PC-3 (cell line): ENCODE measurements at regions of chr6 and their contacts with region 1.

Region 1: GRCh38 chr6:144696610-144697368 is 411.7 kb downstream of the UTRN start:
- DNase-seq: peak; percentile 61
- ATAC-seq: peak; percentile 84
- H3K4me3 ChIP-seq: no peak overlapping the region
- H3K27ac ChIP-seq: peak overlapping the region; percentile 34; the same call in 1 of the 2 replicates
- H3K4me1 ChIP-seq: peaks cover 13% of the 10 kb centered on the region
- H3K27me3 ChIP-seq: no peaks in the 10 kb centered on the region
- CTCF ChIP-seq: no peak

Region 2: GRCh38 chr6:144710237-144710636 is 13.4 kb after region 1 on chr6:
- CTCF ChIA-PET with region 1: no interaction called
- POLR2A ChIA-PET with region 1: no interaction called
- intact Hi-C with region 1: loop called (anchors 2 kb)
- DNase-seq: peak; percentile 91
- ATAC-seq: peak; percentile 94
- H3K4me3 ChIP-seq: no peak overlapping the region
- H3K27ac ChIP-seq: peak overlapping the region; percentile 63
- H3K4me1 ChIP-seq: peaks cover 35% of the 10 kb centered on the region
- H3K27me3 ChIP-seq: no peaks in the 10 kb centered on the region
- CTCF ChIP-seq: no peak

Region 3: DNA sequence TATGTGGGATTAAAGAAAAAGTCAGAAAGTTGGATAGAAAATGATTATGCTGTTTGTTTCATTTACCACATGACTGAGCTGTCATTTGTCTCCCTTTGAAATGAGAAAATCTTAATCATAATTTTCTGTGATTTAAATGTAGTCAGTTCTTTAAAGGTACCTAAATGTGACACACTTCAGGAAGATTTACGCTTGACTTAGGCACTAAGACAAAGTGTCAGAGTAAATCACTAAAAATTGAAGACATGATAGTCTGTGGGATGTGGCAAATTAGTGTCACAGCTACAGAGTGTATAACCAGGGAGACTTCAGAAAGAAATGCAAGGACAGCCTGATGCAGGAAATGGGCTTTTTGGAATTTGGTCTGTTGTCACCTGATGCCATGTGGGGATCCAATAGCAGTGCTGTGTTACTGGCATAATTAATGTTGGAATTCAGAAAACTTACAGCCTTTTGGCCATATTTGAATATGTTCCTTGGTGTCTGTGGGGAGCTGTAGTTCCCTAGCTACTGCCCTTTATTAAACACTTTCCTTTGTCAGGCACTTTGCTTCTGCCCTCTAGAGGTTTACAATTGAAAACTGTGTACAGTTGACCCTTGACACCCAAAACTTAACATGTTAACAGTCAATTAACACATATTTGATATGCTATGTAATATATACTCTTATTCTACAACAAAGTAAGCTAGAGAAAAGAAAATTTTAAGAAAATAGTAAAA is 82.1 kb after region 1 on chr6:
- CTCF ChIA-PET with region 1: no interaction called
- POLR2A ChIA-PET with region 1: no interaction called
- intact Hi-C with region 1: no loop called
- DNase-seq: peak; percentile 23
- ATAC-seq: no peak; the same call in 1 of the 2 replicates
- H3K4me3 ChIP-seq: no peak overlapping the region
- H3K27ac ChIP-seq: no peak overlapping the region
- H3K4me1 ChIP-seq: no peaks in the 10 kb centered on the region
- H3K27me3 ChIP-seq: no peaks in the 10 kb centered on the region
- CTCF ChIP-seq: peak; percentile 57